Activated CD8-positive, alpha-beta memory T cell treated with anti-CD3 and anti-CD28 coated beads, Interleukin-2, amount 10 ng/mL, durations not matched to agents 7 days and 5 days (primary cell): ENCODE measurements at regions of chr1 and their contacts with region 1.

Region 1: DNA sequence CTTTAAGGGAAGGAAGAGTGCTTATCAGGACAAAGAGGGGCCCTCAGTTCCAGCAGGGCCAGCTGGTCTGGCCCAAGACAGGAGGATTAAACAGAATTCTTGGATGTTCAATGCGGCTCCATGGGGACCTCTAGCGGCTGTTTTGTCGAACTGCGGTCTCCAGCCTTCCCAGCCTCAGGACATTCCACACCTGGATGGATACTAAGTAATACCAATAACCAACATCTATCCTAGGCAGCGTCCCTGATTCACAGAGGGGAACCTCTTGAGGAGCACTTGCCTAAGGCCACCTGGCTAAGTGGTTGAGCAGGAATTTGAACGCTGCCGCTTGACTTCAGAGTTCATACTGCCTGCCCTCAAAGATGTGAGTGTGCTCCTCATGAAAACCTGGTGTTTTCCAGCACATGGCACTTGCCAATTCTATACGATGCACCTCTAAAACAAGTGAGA is 15.5 kb upstream of the CD247 start:
- DNase-seq: peak; percentile 73
- ATAC-seq: peak; percentile 86
- H3K4me3 Mint-ChIP-seq: no peak overlapping the region
- H3K27ac Mint-ChIP-seq: no peak overlapping the region
- H3K4me1 Mint-ChIP-seq: peaks cover 4% of the 10 kb centered on the region
- H3K27me3 Mint-ChIP-seq: peaks cover 7% of the 10 kb centered on the region

Region 2: DNA sequence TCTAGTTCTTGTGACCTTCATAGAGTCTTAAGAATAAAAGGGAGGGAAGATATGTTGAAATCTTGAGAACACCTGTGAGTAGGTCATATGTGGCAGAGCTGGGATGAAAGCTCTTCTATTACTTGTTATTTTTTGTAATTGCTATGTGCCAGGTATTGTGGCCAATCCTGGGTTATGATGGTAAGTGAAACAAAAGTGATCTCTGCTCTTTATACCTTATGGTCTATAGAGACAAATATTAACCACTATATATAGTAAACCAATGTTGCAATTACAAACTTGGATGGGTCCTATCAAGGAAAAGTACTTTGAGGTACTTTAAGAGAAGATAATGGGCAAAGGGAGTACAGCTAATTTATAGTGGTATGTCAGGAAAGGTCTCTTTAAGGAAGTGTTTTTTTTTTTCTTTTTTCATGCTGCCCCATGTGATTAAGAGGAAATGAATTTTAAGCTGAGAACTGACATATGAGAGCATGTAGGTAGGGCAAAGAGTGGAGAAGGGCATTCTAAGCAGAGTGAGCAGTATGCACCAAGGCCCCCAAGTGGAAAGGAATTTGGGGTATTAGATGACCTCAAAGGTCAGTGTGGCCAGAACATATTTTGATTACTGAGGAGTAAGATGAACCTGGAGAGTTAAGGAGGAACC is 269.9 kb before region 1 on chr1:
- CTCF ChIA-PET with region 1: interaction called, 37 read pairs
- DNase-seq: no peak
- ATAC-seq: peak; percentile 28
- H3K4me3 Mint-ChIP-seq: no peak overlapping the region
- H3K27ac Mint-ChIP-seq: no peak overlapping the region
- H3K4me1 Mint-ChIP-seq: peaks cover 20% of the 10 kb centered on the region
- H3K27me3 Mint-ChIP-seq: no peaks in the 10 kb centered on the region

Region 3: GRCh38 chr1:167428395-167428794 is 105.5 kb before region 1 on chr1:
- CTCF ChIA-PET with region 1: interaction called, 13 read pairs
- DNase-seq: no peak
- ATAC-seq: no peak
- H3K4me3 Mint-ChIP-seq: no peak overlapping the region
- H3K27ac Mint-ChIP-seq: peak overlapping the region; percentile 72
- H3K4me1 Mint-ChIP-seq: peaks cover 28% of the 10 kb centered on the region
- H3K27me3 Mint-ChIP-seq: no peaks in the 10 kb centered on the region

Region 4: GRCh38 chr1:167454894-167455785 is 78.7 kb before region 1 on chr1:
- CTCF ChIA-PET with region 1: interaction called, 13 read pairs
- DNase-seq: peak; percentile 87
- ATAC-seq: peak; percentile 70
- H3K4me3 Mint-ChIP-seq: peak overlapping the region; percentile 78
- H3K27ac Mint-ChIP-seq: peak overlapping the region; percentile 56
- H3K4me1 Mint-ChIP-seq: peaks cover 62% of the 10 kb centered on the region
- H3K27me3 Mint-ChIP-seq: no peaks in the 10 kb centered on the region

Region 5: DNA sequence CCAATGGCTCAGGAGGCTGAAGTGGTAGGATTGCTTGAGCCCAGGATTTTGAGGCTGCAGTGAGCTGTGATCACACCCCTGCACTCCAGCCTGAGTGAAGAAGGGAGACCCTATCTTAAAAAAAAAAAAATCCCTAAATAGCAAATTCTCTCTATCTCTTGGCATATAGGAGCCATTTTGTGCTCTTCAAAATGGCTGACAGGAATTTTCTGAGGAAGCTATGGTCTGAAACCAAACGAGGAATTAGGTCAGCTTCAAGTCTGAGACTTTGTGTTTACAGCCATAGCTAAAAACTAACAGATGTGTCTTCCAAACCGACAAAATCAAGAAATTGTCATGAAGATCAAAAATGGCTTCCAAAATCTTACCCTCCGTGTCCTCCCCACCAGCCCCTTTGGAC is 26.2 kb before region 1 on chr1:
- CTCF ChIA-PET with region 1: interaction called, 17 read pairs
- DNase-seq: no peak
- ATAC-seq: no peak
- H3K4me3 Mint-ChIP-seq: no peak overlapping the region
- H3K27ac Mint-ChIP-seq: no peak overlapping the region
- H3K4me1 Mint-ChIP-seq: peaks cover 72% of the 10 kb centered on the region
- H3K27me3 Mint-ChIP-seq: no peaks in the 10 kb centered on the region

Region 6: DNA sequence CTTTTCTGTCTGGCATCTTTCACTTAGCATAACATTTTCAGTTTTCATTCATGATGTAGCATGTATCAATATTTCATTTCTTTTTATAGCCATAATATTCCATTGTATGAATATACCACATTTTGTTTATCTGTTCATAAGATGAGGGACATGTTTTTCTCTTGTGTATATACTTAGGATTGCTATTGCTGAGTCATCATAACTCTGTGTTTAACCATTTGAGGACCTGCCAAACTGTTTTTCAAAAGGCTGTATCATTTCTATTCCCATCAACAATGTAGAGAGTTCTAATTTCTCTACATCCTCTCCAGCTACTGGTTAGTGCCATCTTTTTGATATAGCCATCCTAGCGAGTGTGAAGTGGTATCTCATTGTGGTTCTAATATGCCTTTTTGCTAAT is 214.1 kb after region 1 on chr1:
- CTCF ChIA-PET with region 1: no interaction called
- DNase-seq: no peak
- ATAC-seq: no peak
- H3K4me3 Mint-ChIP-seq: no peak overlapping the region
- H3K27ac Mint-ChIP-seq: no peak overlapping the region
- H3K4me1 Mint-ChIP-seq: peaks cover 10% of the 10 kb centered on the region
- H3K27me3 Mint-ChIP-seq: no peaks in the 10 kb centered on the region